GM10248 (cell line): ENCODE measurements at regions of chr11 and their contacts with region 1.

Region 1: DNA sequence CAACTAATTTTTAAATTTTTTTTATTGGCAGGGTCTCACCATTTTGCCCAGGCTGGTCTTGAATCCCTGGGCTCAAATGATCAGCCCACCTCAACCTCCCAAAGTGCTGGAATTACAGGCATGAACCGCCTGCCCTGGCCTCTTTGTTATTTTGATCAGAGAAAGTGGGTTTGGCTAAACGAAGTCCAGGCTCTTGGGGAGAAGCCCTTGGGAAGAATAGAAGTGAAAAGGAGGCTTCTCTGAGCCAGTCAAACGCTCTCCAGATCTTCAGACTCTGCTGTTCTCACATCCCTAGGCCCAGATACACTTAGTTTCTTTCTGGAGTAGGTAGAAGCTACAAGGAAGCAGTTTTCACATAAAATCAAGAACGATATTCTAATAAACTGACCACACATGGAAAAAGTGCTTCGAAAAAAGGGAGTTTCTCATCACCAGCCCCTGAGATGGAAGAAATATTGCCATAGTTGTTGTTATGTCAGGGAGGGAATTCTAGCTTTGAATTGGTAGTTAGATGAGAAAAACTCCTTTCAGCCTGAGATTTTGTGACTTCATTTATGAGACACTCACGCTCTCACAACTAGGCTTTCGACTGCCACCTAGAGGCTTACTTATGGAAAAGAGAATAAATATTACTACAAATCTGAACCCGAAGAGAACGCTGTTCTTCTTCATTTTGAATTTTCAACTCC is 41.7 kb upstream of the AQP11 start:
- DNase-seq: peak; percentile 62
- CTCF ChIP-seq: peak; percentile 58

Region 2: DNA sequence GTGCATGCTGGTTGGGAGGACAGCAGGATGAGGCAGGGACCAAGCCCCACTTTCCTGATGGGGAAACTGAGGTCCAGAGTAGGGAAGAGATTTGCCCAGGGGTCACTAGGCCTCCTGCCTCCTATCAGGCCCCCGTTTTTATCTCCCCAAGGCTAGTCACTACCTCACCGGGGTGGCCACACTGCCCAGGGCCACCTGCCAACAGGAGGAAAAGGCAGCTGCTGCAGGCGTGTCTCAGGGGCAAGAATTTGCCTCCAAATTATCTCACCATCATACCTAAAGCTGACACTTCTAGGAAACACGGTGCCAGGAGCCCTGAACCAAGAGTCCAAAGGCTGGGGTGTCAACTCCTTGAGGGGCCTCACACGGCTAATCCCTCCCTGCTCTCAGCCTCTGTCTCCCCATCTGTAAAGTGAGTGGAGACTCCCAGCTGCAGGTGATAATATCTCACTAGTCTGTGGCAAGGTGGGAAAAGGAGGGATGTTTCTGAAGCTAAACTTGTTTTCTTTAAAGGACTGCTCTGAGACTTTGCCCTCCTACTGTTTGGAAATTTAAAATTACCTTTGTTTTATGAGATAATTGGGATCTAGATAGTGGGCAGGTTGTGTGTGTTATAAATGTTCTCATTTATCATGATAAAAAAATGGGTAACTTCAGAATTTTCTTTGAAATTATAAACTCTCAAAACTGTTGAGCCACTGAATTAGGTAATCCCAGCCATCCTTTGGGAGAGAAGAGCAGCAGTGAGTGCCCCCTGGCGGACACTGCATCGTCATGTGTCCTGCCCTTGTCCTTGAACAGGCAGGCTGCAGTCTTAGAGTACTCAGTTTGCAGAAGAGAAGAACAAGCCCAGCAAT is 360.0 kb before region 1 on chr11:
- CTCF ChIA-PET with region 1: interaction called, 16 read pairs
- POLR2A ChIA-PET with region 1: no interaction called
- DNase-seq: peak; percentile 84
- CTCF ChIP-seq: peak; percentile 92

Region 3: GRCh38 chr11:77195171-77195751 is 352.7 kb before region 1 on chr11:
- CTCF ChIA-PET with region 1: interaction called, 35 read pairs
- POLR2A ChIA-PET with region 1: no interaction called
- DNase-seq: no peak
- CTCF ChIP-seq: no peak

Region 4: GRCh38 chr11:77568916-77569675 is 21.1 kb after region 1 on chr11:
- CTCF ChIA-PET with region 1: interaction called, 11 read pairs
- POLR2A ChIA-PET with region 1: no interaction called
- DNase-seq: no peak
- CTCF ChIP-seq: no peak